ENCODE measurements at regions of chr15 and their contacts with region 1.

Region 1: DNA sequence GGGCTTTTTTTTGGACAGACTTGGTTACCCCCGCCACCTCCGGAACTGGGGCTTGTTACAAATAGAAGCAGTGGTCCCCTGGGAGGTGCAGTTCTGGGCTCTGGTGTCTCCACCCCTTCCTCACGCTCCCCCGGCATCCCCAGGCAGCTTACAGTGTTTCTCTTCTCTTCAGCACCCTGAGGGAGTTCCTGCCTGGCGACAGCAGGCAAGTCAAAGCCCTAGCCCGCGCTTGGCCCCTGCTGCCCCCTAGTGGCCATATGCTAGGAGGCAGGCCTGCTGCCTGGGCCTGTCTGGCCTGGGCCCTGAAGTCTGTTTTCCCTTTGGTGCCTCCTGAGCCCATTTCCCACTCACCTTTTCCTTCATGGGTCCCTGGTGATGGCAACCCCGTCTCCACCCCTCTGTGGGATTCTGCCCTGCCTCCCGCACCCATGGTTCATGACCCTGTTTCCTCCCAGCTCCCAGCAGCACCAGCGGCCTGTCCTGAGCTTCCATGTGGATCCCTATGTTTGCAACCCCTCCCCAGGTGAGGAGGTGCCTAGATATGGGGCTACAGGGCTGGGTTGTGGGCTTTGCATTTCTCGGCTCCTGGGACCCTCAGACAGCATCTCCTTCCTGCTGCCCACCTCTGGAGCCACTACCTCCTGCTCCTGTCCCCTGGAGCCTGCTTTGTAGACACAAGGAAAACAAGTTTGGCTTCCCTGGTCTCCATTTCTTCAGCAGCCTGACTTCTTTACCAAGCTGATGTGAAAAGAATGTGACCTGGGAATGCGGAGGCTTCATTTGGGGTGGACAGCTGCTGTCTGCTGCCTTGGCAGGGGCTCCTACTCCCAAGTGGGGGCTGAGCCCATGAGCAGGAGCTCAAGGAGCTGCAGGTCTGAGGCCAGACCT is 2.2 kb downstream of the SNX22 start:
- DNase-seq: peak; percentile 96

Region 2: GRCh38 chr15:64095795-64096667 is 57.7 kb before region 1 on chr15 and contains the start of gene SNX1:
- intact Hi-C with region 1: loop called (anchors 5 kb)
- DNase-seq: peak; percentile 98
- total RNA-seq, gene SNX1: 111 TPM

Region 3: GRCh38 chr15:64274341-64274950 is 120.7 kb after region 1 on chr15:
- intact Hi-C with region 1: no loop called
- DNase-seq: no peak

Measured in cardiac septum (tissue), 1 donor.